Ovary (tissue), 10 donors: ENCODE measurements at regions of chr10 and their contacts with region 1.

Region 1: DNA sequence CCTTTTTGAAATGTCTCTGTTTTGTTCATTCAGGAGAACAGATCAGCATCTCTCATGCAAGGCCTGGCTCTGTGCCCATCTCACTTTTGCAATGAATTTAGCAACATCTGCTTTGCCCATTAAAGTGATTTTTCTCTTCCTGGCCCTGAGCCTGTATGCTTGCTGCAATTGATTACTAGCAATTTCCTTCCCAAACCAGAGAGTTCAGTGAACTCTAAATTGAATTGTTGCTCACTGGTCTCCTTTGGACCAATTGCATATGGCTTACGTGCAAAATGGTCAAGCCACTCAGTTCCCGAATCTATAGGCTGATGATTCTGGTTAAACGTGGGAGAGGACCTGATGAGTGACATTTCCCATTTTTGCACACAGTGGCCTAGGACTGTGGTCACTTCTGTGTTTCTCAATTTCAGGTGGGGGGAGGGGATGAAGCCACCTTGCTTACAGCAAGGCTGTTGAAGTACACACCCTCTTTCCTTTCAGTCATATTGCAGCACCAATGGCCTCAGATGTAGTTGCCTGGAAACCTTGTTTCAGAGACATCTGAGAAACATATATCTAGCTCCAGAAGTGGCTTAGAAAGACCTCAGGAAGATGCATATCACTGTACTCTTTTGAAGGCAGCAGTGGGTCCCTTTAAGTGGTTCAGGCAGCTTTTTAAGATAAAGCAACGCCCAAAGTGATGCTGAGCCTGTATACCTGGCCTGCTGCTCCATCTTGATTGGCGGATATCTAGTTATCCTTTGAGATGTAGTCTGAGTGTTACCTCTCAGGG is 201.4 kb downstream of the PTEN start:
- DNase-seq: peak in 2 of 5 donors; percentile 28 to 31
- H3K4me3 ChIP-seq: no peak overlapping the region
- H3K27ac ChIP-seq: no peak overlapping the region
- H3K4me1 ChIP-seq: peaks cover 9% of the 10 kb centered on the region
- H3K27me3 ChIP-seq: no peaks in the 10 kb centered on the region
- CTCF ChIP-seq: no peak
- EP300 ChIP-seq: no peak
- POLR2A ChIP-seq: no peak

Region 2: GRCh38 chr10:86803156-86803555 is 1261.6 kb before region 1 on chr10:
- intact Hi-C with region 1: no loop called
- DNase-seq: no peak
- H3K4me3 ChIP-seq: no peak overlapping the region
- H3K27ac ChIP-seq: no peak overlapping the region
- H3K4me1 ChIP-seq: peaks cover 3% of the 10 kb centered on the region
- H3K27me3 ChIP-seq: no peaks in the 10 kb centered on the region
- CTCF ChIP-seq: no peak
- EP300 ChIP-seq: no peak
- POLR2A ChIP-seq: no peak

Region 3: DNA sequence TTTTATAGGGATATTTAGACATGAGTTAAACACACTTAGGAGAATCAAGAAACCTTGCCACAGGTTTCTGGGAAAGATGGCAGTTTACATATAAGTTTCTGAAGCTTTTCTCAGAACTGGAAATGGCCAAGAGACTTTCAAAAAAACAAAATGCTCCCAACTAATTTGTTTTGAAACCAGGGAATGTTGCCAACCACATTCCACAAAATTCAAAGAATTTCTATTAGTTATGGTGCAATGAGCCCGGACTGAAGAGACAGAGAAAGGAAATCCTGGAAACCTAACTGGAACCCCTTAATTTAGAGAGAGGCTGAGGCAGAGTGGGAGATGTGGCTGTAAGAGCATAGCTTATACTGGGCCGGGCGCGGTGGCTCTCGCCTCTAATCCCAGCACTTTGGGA is 72.8 kb before region 1 on chr10:
- intact Hi-C with region 1: loop called in 1 of 4 experiments (anchors 10 kb)
- DNase-seq: no peak
- H3K4me3 ChIP-seq: no peak overlapping the region
- H3K27ac ChIP-seq: no peak overlapping the region
- H3K4me1 ChIP-seq: no peaks in the 10 kb centered on the region
- H3K27me3 ChIP-seq: no peaks in the 10 kb centered on the region
- CTCF ChIP-seq: no peak
- EP300 ChIP-seq: no peak
- POLR2A ChIP-seq: no peak

Region 4: GRCh38 chr10:88117869-88118632 is 53.3 kb after region 1 on chr10:
- intact Hi-C with region 1: no loop called
- DNase-seq: no peak
- H3K4me3 ChIP-seq: no peak overlapping the region
- H3K27ac ChIP-seq: no peak overlapping the region
- H3K4me1 ChIP-seq: no peaks in the 10 kb centered on the region
- H3K27me3 ChIP-seq: no peaks in the 10 kb centered on the region
- CTCF ChIP-seq: no peak
- EP300 ChIP-seq: no peak
- POLR2A ChIP-seq: no peak

Region 5: DNA sequence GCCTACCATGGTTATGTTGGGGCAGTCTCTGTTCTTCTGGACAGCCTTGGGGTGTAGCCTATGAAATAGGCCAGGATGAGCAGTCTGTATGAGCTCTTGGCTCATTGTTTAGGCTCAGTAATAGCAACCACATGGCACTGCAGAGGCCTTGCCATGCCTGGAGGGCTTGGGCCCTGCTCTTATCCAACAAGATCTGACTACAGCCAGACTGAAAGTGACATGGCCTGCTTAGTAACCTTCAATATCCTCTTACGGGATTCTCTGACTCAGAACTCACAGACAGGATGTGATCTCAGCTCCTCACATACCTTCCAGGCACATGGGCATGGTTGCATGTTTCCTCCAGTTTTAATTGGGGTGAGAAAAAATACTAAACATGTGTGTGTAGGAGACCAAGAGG is 87.9 kb after region 1 on chr10:
- intact Hi-C with region 1: loop called in 1 of 4 experiments (anchors 5 kb)
- DNase-seq: no peak
- H3K4me3 ChIP-seq: no peak overlapping the region
- H3K27ac ChIP-seq: no peak overlapping the region
- H3K4me1 ChIP-seq: peaks cover 8% of the 10 kb centered on the region
- H3K27me3 ChIP-seq: no peaks in the 10 kb centered on the region
- CTCF ChIP-seq: no peak
- EP300 ChIP-seq: no peak
- POLR2A ChIP-seq: no peak